ENCODE measurements at regions of chr20 and their contacts with region 1.

Region 1: GRCh38 chr20:21027569-21027968 is 78.6 kb downstream of the LINC00237 start:
- DNase-seq: no peak
- ATAC-seq: no peak
- H3K4me3 ChIP-seq: no peak overlapping the region
- H3K27ac ChIP-seq: no peak overlapping the region
- H3K4me1 ChIP-seq: no peaks in the 10 kb centered on the region
- H3K27me3 ChIP-seq: peaks cover 0 to 35% (median 18%) of the 10 kb centered on the region in 7 donors
- CTCF ChIP-seq: no peak

Region 2: DNA sequence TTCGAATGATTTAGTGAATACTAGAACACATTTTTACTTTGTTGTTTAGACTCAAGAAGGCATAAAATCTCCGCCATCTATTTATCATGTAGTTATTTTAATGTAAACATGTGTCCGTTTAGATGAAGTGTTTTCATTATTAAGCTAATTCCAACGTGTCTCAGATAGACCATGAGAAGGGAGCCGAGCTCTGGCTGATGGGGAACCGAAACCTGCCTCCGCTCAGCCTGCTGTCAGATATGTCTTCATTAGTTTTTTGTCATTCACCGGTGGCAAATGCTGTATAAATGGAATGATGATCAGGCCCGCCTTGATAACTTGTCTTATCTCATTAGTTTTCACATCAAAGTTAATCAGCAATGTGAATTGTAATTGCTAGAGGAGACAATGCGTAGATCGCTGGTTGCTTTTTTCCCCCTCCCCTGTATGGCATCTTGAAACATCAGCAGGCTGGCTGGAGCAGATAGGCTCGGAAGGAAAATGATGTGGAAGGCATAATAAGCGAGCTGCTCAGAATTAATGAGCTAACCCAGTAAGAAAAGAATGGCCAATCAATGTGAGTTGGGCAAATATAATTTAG is 57.8 kb before region 1 on chr20:
- intact Hi-C with region 1: loop called in 1 of 10 experiments (anchors 10 kb)
- DNase-seq: no peak
- ATAC-seq: no peak
- H3K4me3 ChIP-seq: no peak overlapping the region
- H3K27ac ChIP-seq: no peak overlapping the region
- H3K4me1 ChIP-seq: no peaks in the 10 kb centered on the region
- H3K27me3 ChIP-seq: peaks cover 0 to 19% (median 10%) of the 10 kb centered on the region in 7 donors
- CTCF ChIP-seq: no peak

Measured in heart right ventricle (tissue), 16 donors.